ENCODE measurements at regions of chr10 and their contacts with region 1.

Region 1: DNA sequence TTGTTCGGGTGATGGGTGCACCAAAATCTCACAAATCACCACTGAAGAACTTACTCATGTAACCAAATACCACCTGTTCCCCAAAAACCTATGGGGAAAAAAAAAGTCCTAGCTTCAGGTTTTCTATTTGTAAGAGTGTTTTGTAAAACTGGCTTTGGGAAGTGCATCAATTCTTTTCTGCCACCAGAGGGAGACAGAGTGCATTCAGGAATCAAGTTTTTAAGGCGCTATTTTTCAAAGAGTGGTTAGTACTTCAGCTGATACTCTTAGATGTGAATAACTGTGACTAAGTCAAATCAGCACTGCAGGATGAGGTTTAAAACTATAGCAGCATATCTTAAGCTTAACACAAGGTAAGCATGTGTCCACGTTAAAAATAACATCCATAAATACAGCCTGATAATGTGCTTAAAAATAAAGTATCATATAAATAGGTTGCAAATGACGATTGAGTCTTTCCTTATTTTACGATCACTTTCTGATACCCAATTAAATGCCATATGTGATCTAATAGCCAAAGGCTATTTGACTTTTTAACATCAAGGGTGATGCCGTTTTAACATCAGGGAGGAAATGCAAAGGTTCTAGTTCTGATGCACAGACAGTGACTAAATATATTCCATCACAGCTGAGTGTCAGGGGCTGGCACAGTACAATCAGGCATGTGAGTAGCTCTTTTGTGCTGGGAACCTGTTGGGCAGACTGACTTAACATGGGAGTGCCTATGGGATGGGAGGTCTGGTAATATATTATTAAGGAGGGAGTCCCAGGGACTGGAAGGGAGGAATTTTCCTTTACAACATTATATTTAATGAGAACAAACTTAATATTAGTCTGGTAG is 10.6 kb upstream of the LYZL2 start:
- DNase-seq: peak; percentile 53
- CTCF ChIP-seq: peak; percentile 88

Region 2: DNA sequence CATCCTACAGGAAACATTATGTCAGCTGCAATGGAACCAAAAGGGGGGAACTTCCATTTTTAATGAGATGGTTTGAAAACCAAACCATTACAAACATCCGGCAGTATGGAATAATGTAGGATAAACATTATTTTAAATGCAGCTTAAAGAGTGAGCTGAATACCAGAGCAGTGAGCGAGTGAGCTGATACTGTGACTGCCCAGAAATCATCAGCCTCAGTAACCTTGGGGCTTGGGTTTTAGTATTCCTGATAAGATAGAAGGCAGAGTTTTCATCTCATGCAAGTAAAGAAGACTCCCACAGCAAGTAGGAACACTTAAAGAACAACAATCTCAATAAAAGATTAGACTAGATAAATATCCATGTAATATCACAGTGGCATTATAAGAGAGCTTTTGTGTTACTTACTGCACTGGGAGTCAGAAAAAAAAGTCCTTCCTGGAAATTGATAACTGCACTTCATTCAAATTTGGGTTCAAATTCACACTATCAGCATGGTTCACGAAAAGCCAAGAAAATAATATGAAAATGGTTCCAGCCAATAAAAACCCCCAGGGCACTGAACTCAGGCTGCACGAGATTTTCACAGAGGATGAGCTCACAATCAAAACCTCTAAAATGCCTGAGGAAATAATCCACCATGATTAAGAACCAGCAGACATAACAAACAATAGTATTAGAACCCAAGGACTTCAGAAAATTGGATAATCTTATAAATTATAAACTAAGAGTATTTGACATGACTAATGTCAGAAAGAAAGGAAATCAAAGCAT is 406.8 kb before region 1 on chr10:
- CTCF ChIA-PET with region 1: no interaction called
- POLR2A ChIA-PET with region 1: no interaction called
- DNase-seq: no peak
- CTCF ChIP-seq: no peak

Region 3: DNA sequence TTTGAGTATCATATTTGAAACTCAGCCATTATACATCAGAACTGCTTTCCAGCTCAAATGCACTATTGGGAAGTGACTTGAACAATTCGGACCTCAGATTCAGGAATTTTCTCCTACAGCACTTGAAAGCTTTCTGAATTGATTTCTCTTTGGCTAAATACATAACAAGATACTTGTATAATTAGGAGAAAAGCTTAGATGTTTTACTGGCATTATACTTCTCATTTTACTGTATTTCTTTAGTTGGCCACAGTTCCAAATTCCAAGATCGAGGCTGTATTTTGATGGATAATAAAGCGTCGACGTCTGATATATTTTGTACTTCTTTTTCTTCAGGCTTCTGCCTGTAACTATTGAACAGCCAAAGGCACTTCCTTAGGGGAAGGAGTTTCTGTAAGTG is 16.1 kb after region 1 on chr10:
- CTCF ChIA-PET with region 1: interaction called, 12 read pairs
- POLR2A ChIA-PET with region 1: no interaction called
- DNase-seq: no peak
- CTCF ChIP-seq: no peak

Region 4: DNA sequence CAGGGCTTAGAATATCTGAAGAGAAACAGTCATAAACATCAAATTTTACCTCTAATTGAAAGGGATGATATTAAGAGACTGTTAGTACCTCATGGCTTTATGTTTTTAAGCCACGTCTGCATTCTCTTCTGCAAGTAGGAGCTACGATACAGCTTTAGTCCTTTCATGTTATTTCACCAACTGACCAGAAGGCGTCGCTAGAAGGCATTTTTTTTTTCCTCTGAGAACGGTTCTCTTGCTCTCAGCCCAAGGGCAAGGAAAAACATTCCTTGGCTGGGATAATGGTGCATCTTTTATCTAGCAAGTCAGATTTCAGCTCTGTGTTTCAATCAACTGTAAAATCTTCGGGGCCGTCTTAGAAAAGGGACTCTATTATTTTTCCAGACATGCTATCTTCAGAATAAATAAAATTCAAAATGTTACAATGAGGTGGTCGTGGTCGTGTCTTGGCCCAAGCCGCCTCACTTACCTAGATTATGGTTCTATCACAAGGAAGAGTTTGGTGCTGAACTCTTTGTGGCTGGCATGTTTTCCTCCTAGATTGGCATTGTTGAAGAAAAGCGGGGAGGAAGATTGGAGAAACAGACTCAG is 31.0 kb after region 1 on chr10:
- CTCF ChIA-PET with region 1: interaction called, 15 read pairs
- POLR2A ChIA-PET with region 1: no interaction called
- DNase-seq: peak; percentile 56
- CTCF ChIP-seq: peak; percentile 80